Posterior vena cava (tissue), 2 donors: ENCODE measurements at regions of chr3 and their contacts with region 1.

Region 1: DNA sequence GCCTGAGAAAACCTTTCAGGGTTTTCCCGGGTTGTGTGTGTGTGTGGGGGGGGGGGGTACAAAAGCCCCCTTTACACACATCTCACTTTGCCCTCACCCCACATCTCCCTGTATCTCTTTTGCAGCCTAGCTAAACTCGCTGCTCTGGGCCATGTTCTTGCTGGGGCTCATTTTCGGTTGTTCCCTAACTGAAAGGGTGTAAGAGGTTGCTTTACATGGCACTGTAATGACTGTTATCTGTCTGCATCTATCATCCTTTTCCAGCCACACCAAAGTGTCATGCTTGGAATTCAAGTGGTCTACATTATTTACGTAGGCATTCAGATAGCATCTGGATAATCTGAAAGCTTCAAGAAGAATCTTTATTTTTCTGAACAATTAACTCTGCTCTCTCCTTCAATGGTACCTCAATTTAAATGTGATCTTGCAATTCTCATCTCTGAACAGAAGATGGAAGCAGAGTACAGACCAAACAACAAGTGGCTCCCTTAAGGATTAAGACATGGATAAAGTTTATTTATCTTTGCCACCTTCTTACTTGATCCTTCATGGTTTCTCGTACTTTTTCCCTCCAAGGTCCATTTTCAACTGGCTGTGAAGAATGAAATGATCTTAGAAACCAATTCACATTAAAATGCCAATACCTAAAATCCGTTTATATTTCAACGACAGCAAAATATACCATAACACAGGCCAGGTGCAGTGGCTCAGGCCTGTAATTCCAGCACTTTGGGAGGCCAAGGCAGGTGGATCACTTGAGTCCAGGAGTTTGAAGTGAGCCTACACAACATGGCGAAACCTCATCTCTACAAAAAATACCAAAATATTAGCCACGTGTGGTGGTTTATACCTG is 34.9 kb downstream of the DCLK3 start:
- DNase-seq: no peak

Region 2: GRCh38 chr3:36814776-36815175 is 85.3 kb after region 1 on chr3:
- intact Hi-C with region 1: no loop called
- DNase-seq: no peak

Region 3: DNA sequence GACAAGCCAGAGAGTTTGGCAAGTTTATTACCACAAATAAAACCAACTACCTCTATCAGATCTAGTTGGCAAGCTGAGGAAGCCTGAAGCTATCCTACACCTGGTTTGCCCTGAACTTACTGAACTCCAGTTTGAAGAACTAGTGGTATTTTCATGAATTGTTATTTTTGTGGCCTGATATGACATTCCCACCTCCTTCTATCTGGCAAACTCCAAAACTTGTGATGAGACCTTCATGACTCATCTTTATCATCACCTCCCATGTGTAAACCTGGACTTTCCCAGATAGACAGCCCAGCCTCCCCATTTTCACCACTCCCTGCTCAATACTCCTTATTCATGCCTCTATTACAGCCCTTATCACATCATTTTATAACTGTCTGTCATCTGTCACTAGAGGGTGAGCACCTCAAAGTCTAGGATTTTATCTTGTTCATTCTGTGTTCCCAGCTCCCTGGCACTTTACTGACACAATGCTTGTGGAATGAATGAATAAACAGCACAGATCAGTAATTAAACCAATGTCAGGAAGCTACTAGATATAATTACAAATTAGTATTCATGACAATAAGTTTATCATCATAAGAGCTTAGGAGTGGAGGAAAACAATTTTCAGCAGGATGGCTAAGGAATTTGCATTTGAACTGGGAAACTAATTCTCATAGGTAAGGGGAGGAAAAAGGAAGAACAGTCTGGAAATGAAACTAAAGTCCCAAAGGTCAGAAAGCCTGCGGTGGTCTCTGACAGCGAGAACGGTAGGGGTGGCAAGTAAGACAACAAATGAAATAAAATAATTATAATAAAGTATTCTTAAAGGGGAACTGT is 228.6 kb after region 1 on chr3:
- intact Hi-C with region 1: loop called in 1 of 2 experiments (anchors 10 kb)
- DNase-seq: no peak

Region 4: GRCh38 chr3:37041546-37042195 is 312.2 kb after region 1 on chr3:
- intact Hi-C with region 1: no loop called
- DNase-seq: no peak